Panc1 (cell line): ENCODE measurements at regions of chr9 and their contacts with region 1.

Region 1: DNA sequence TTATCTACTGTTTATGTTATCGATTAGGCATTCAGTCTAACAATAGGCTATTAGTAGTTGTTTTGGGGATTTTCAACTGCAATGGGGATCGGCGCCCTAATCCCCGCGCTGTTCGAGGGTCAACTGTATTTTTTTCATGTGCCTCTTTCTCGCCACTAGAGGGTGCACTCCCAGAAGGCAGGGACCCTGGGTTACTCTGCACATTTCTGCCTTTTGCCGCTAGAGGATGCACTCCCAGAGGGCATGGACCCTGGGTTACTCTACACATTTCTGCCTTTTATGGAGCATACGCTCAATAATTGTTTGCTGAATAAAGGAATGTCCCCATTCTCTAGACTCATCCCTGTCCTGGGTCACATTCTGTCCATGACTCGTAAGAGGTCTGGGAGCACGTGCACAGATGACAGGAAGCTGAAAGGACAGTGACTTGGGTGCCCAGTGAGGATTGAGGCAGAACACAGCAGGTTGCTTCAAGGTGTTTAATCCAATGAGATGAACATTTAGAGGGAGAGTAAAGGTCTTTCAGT is 27.9 kb upstream of the RECK start:
- DNase-seq: peak; percentile 64
- ATAC-seq: peak; percentile 97
- H3K4me3 ChIP-seq: no peak overlapping the region
- H3K27ac ChIP-seq: no peak overlapping the region
- H3K4me1 ChIP-seq: no peaks in the 10 kb centered on the region
- H3K27me3 ChIP-seq: peaks cover 73% of the 10 kb centered on the region
- CTCF ChIP-seq: peak; percentile 100

Region 2: GRCh38 chr9:35172878-35173277 is 836.0 kb before region 1 on chr9:
- CTCF ChIA-PET with region 1: interaction called, 13 read pairs
- POLR2A ChIA-PET with region 1: no interaction called
- in situ Hi-C with region 1: no loop called
- intact Hi-C with region 1: no loop called
- DNase-seq: no peak
- ATAC-seq: no peak
- H3K4me3 ChIP-seq: no peak overlapping the region
- H3K27ac ChIP-seq: no peak overlapping the region
- H3K4me1 ChIP-seq: no peaks in the 10 kb centered on the region
- H3K27me3 ChIP-seq: no peaks in the 10 kb centered on the region
- CTCF ChIP-seq: no peak

Region 3: GRCh38 chr9:36148311-36149051 is 139.6 kb after region 1 on chr9:
- CTCF ChIA-PET with region 1: interaction called, 9 read pairs
- POLR2A ChIA-PET with region 1: interaction called, 17 read pairs
- in situ Hi-C with region 1: no loop called
- intact Hi-C with region 1: no loop called
- DNase-seq: no peak
- ATAC-seq: peak; percentile 59
- H3K4me3 ChIP-seq: no peak overlapping the region
- H3K27ac ChIP-seq: no peak overlapping the region
- H3K4me1 ChIP-seq: peaks cover 6% of the 10 kb centered on the region
- H3K27me3 ChIP-seq: no peaks in the 10 kb centered on the region
- CTCF ChIP-seq: no peak